Astrocyte of the cerebellum (primary cell): ENCODE measurements at regions of chr14 and their contacts with region 1.

Region 1: DNA sequence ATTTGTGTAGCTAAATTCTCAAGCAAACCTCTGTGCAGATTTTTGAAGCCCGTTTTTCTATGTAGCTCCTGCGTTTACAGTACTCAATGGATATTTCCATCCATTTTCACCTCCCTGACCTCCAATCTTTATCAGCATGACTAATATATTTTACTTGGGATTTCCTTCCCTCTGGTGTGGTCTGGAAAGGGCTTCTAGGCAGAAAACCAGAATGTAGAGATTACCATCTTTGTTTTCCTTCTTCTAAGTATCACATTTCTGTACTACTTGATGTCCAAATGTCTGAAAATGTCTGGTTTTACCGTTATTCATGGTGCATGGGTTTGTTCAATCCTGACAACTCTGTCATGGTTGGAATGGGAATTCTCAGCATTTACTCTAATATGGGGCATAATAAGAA is 907.6 kb upstream of the FLRT2 start:
- DNase-seq: no peak
- H3K4me3 ChIP-seq: no peak overlapping the region
- CTCF ChIP-seq: no peak

Region 2: GRCh38 chr14:84554136-84554535 is 68.2 kb before region 1 on chr14:
- in situ Hi-C with region 1: loop called (anchors 5 kb)
- DNase-seq: no peak
- H3K4me3 ChIP-seq: no peak overlapping the region
- CTCF ChIP-seq: no peak